ENCODE measurements at regions of chr5 and their contacts with region 1.

Region 1: DNA sequence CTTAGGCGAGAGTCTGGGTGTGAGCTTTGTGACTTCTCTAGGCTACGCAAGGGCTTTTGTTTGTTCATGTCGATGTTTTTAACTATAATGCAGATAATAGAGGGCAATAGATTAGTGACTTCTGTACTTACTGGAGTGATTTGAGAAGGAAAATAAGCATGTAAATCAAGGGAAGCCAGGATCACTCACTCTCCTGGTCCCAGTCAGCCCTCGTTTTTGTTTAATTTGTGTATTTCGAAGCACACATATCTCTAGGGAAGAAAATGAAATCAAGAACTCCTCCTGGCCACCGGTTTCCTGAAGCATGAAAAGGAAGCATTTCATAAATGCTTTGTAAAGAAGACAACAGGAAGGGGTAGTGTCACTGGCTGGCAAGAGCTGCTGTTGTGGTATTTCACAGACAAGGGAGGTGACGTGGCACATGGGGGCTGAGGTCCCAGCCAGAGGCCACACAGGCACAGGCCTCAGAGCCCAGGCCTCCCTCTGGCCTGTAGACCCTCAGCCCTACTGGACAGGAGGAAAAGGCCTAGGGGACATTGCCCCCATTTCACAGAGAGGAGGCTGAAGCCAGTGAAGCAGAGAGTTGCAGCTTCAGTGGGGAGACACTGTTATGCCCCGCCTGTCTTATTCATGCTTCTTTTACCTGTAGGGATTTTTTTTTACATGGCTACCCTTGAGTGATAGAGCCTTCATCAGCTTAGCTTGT is 34.1 kb downstream of the IRF1 start:
- DNase-seq: peak; percentile 68
- ATAC-seq: peak; percentile 48
- H3K4me3 Mint-ChIP-seq: peak overlapping the region; percentile 66
- H3K27ac Mint-ChIP-seq: peak overlapping the region; percentile 99
- H3K4me1 Mint-ChIP-seq: peaks cover 77% of the 10 kb centered on the region
- H3K27me3 Mint-ChIP-seq: no peaks in the 10 kb centered on the region

Region 2: DNA sequence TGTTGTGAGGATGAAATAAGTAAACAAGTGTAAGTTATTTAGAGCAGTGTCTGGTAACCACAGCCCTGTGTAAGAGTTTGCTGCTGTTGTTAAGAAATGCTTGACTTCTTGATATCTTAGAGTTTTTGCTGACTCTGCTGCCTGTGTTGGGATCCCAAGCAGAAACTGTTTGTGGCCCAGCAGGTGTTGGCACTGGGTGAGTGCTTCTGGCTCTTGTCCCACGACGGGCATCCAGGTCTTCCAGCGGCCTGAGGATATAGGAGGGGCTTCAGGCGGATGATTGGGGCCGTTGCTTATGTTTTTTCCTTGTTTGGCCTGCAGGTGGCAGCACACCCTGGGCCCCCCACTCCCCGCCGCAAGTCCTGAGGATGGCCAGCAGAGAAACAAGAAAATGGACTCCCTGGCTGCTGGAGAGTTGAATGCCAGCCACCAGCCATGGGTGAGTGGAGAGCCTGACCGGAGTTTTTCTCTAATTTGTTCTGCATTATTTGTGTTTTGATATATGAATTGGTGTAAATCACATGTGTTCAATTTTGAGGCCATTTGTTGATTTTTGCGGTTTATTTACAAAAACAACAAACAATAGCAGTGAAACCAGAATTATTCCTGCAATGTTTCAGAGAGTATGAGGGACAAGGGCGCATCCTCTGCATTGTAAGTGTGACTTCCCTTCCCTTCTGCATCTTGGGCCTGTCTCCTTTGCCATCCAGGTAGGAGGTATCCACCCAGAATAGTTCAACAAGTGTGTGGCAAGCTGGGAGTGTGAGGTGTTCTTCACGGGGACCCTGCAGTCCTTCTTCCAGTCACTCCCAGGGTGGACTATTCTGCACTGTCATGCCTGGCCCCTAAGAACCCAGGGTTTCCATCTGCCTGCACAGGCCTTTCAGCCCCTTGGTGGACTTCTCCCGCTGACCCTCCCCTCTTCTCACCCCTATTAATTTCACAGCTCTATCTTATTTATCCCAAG is 36.7 kb before region 1 on chr5:
- POLR2A ChIA-PET with region 1: interaction called, 188 read pairs
- DNase-seq: peak; percentile 76
- ATAC-seq: peak; percentile 55
- H3K4me3 Mint-ChIP-seq: peak overlapping the region; percentile 76
- H3K27ac Mint-ChIP-seq: peak overlapping the region; percentile 94
- H3K4me1 Mint-ChIP-seq: peaks cover 78% of the 10 kb centered on the region
- H3K27me3 Mint-ChIP-seq: no peaks in the 10 kb centered on the region

Region 3: DNA sequence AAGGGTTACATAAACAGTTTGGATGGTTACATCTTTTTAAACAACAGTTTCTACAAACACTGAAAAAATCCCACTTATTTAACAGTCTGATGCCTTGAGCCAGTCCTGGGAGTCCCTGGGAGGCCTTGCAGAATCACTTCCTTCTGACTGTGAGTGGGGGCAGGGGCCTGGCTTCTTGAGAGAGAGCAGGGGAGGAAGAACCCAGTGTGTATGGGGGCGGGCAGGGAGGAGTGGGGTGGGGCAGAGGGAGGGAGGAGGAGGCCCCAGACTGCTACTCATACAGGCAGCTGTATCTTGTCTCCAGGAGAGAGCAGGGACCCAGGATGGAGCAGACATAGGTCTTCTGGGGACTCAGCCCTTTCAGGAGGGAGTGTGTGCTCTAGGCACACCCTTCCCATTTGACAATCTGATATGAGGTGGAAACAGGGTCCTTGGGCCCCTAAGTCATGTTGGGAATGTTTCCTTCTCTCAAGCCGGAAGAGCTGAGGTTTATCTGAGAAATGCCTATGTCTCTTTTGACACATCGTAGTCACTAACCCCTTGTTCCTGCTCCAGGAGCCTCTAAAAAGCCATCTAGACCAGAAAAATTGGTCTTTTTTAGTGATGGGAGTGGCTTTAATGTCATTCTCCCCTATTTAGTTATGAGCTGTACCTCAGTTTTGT is 18.7 kb before region 1 on chr5:
- POLR2A ChIA-PET with region 1: interaction called, 57 read pairs
- DNase-seq: peak; percentile 65
- ATAC-seq: peak; percentile 98
- H3K4me3 Mint-ChIP-seq: peak overlapping the region; percentile 66
- H3K27ac Mint-ChIP-seq: peak overlapping the region; percentile 86
- H3K4me1 Mint-ChIP-seq: peaks cover 73% of the 10 kb centered on the region
- H3K27me3 Mint-ChIP-seq: no peaks in the 10 kb centered on the region

Region 4: GRCh38 chr5:132466433-132467286 is 10.2 kb after region 1 on chr5:
- POLR2A ChIA-PET with region 1: interaction called, 334 read pairs
- DNase-seq: peak; percentile 79
- ATAC-seq: peak; percentile 80
- H3K4me3 Mint-ChIP-seq: peak overlapping the region; percentile 81
- H3K27ac Mint-ChIP-seq: peak overlapping the region; percentile 85
- H3K4me1 Mint-ChIP-seq: peaks cover 85% of the 10 kb centered on the region
- H3K27me3 Mint-ChIP-seq: no peaks in the 10 kb centered on the region

Region 5: DNA sequence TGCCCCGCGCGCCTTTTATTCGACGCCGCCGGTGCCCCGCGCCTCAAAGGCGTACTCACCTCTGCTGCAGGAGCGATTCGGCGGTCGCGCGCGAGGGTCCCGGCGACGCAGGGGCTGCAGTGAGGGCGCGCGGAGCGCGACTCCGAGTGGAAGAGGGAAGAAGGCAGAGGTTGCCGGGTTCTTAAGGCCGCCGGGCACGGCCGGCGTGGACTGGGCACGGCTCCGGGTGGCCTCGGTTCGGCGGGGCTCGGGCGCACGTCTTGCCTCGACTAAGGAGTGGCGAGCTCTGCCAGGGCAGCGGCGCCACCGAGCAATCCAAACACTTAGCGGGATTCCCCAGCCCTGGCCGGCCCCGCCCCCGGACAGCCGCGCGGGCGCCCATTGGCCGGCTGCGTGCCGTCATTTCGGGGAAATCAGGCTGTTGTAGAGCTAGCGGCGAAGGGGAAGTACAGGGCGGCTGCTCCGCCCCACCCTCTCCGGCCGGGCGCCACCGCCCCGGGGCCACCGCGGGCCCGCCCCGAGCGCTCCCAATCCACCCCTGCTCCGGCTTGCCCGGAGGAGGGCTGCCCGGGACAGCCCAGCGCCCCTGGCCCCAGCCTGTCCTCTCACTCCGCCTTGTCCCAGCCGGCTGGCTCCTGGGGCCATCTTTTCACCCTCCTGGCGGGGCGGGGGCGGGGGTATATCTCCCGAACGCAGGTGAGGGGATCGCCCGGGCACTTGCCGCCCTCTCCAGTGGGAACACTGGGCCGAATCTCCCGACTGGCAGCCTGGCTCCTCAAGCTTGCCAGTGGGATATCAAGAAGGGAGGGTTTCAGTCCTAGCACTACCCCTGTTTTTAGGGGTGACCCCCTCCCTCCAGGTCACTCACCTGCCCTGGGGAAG is 34.3 kb after region 1 on chr5 and contains the start of gene IRF1:
- POLR2A ChIA-PET with region 1: interaction called, 334 read pairs
- DNase-seq: peak; percentile 99
- ATAC-seq: peak; percentile 78
- H3K4me3 Mint-ChIP-seq: peak within 1 kb of the TSS; percentile 98
- H3K27ac Mint-ChIP-seq: peak within 1 kb of the TSS; percentile 92
- H3K4me1 Mint-ChIP-seq: peaks cover 63% of the 10 kb centered on the region
- H3K27me3 Mint-ChIP-seq: no peaks in the 10 kb centered on the region
- total RNA-seq, gene IRF1: 228 to 238 TPM

Region 6: DNA sequence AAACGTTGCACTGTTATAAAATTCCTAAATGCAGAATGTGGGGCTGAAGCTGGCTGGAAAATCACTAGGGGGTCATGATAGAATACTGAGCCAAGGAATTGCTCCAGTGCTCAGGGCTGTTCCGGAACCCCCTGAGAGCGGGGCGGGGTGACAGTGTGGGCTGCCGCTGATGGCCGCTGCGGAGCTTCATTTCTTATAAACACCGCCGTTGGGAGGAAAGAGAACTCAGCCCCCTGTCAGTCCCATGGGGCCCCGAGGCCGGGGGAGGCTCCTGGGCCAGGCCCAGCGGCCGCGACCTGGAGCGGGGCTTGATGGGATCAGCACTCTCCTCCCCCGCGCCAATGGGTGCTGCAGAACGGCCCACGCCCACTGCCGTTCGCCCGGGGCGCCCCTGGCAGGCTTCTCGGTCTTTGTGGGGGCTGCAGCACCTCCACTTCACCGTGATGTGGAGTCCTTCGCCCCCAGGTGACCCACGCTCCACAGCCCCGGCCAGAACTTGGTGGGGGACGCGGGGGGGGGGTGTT is 39.3 kb after region 1 on chr5:
- POLR2A ChIA-PET with region 1: interaction called, 334 read pairs
- DNase-seq: peak; percentile 82
- ATAC-seq: peak; percentile 57
- H3K4me3 Mint-ChIP-seq: peak overlapping the region; percentile 87
- H3K27ac Mint-ChIP-seq: peak overlapping the region; percentile 99
- H3K4me1 Mint-ChIP-seq: peaks cover 61% of the 10 kb centered on the region
- H3K27me3 Mint-ChIP-seq: no peaks in the 10 kb centered on the region

Region 7: GRCh38 chr5:132540764-132541163 is 84.3 kb after region 1 on chr5:
- POLR2A ChIA-PET with region 1: no interaction called
- DNase-seq: no peak
- ATAC-seq: no peak
- H3K4me3 Mint-ChIP-seq: no peak overlapping the region
- H3K27ac Mint-ChIP-seq: no peak overlapping the region
- H3K4me1 Mint-ChIP-seq: peaks cover 10% of the 10 kb centered on the region
- H3K27me3 Mint-ChIP-seq: peaks cover 6% of the 10 kb centered on the region

Measured in activated naive CD8-positive, alpha-beta T cell treated with anti-CD3 and anti-CD28 coated beads, Interleukin-2, amount 10 ng/mL, durations not matched to agents 7 days and 5 days (primary cell).